ENCODE measurements at regions of chr12 and their contacts with region 1.

Region 1: DNA sequence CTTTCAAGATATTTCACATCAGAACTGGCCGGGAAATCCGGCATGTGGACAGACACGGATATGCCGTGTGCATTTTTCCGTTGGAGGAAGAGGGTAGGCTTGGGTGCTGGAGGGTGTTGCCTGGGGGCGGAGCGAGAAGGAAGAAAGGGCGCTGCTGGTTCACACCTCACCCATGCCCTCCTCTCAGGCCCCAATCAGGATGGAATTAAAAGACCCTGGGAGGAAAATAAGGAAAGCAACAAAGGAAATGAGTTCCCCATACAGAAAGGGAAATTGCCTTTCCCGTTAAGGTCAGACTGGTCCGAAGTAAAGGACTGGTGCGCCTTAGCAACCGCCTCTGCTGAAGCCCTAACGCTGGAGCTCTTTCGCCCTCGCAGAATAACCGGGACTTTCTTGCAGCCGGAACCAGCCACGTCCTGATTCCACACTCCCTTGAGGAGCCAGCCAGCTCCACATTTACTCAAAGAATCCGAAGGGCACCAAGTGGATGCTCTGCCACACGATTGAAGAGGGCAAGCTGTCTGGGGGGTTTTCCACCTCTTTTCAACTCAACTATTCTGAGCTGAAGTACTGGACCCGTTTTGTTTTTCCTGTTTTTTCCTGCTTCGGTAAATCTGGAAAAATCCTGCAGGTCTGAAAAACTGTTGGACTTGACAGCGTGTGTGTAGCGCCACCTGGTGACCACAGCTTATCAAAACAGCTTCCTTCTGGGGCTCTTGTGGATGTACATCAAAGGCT is 37.7 kb upstream of the BCL2L14 start:
- DNase-seq: peak; percentile 78
- ATAC-seq: peak; percentile 70
- H3K4me3 ChIP-seq: peak overlapping the region; percentile 21 to 76 (median 48)
- H3K4me3 Mint-ChIP-seq: peak overlapping the region; percentile 75
- H3K27ac ChIP-seq: no peak overlapping the region
- H3K27ac Mint-ChIP-seq: no peak overlapping the region
- H3K4me1 ChIP-seq: peaks cover 12 to 15% of the 10 kb centered on the region in 2 donors
- H3K4me1 Mint-ChIP-seq: peaks cover 13% of the 10 kb centered on the region
- H3K27me3 ChIP-seq: no peaks in the 10 kb centered on the region
- H3K27me3 Mint-ChIP-seq: peaks cover 4% of the 10 kb centered on the region
- CTCF ChIP-seq: peak; percentile 87

Region 2: GRCh38 chr12:11344500-11344899 is 688.5 kb before region 1 on chr12:
- CTCF ChIA-PET with region 1: no interaction called
- POLR2A ChIA-PET with region 1: no interaction called
- intact Hi-C with region 1: no loop called
- DNase-seq: no peak
- ATAC-seq: no peak
- H3K4me3 ChIP-seq: no peak overlapping the region
- H3K4me3 Mint-ChIP-seq: no peak overlapping the region
- H3K27ac ChIP-seq: no peak overlapping the region
- H3K27ac Mint-ChIP-seq: no peak overlapping the region
- H3K4me1 ChIP-seq: no peaks in the 10 kb centered on the region
- H3K4me1 Mint-ChIP-seq: no peaks in the 10 kb centered on the region
- H3K27me3 ChIP-seq: no peaks in the 10 kb centered on the region
- H3K27me3 Mint-ChIP-seq: no peaks in the 10 kb centered on the region
- CTCF ChIP-seq: no peak

Region 3: GRCh38 chr12:11595080-11595479 is 437.9 kb before region 1 on chr12:
- CTCF ChIA-PET with region 1: interaction called, 12 read pairs
- POLR2A ChIA-PET with region 1: no interaction called
- intact Hi-C with region 1: no loop called
- DNase-seq: no peak
- ATAC-seq: no peak
- H3K4me3 ChIP-seq: no peak overlapping the region
- H3K4me3 Mint-ChIP-seq: no peak overlapping the region
- H3K27ac ChIP-seq: no peak overlapping the region
- H3K27ac Mint-ChIP-seq: no peak overlapping the region
- H3K4me1 ChIP-seq: peaks cover 3 to 5% of the 10 kb centered on the region in 2 donors
- H3K4me1 Mint-ChIP-seq: peaks cover 1% of the 10 kb centered on the region
- H3K27me3 ChIP-seq: no peaks in the 10 kb centered on the region
- H3K27me3 Mint-ChIP-seq: peaks cover 3% of the 10 kb centered on the region
- CTCF ChIP-seq: no peak

Region 4: DNA sequence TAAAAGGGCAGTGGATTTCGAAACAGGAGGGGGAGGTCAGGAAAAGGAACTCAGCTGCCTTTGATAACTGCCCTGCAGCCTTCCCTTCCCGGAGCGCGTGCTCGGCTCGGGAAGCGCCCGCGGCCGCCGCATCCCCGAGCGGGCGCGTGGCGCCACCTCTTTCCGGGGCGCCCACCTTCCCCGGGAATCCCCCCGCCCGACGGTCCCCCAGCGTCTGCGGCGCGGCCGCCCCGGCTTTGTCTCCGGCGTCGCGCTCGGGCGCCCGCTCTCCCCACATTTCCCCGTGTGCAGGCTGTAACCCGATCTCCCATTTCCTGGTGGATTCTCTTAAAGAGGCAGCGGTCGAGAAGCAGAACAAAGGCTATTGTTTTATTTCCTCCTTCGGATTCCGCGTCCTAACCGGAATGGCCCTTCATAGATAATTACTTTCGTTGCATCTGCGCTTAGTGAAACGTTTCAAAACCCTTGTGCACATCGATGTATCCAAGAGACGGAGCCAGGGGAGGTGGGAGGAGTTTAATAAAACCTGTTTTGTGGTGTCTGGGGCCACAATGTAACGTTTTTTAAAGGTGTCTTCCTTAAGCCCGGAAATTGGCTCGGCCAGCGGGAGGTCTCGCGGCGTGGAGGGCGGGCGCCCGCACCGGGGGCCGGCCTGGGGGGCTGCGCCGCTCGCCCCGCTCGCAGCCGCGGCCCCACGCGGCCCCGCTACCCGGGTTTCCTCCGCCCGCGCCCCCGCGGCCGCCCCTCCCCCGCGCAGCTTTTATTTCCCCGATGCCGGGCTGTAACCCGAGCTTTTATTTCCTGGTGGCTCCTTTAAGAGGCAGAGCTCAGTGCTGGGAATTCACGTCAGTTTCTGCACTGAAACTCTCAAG is 384.0 kb before region 1 on chr12 and contains the start of gene ETV6:
- CTCF ChIA-PET with region 1: interaction called, 20 read pairs
- POLR2A ChIA-PET with region 1: no interaction called
- intact Hi-C with region 1: no loop called
- DNase-seq: peak; percentile 86
- ATAC-seq: peak; percentile 48
- H3K4me3 ChIP-seq: peak within 1 kb of the TSS; percentile 77 to 96 (median 87)
- H3K4me3 Mint-ChIP-seq: peak within 1 kb of the TSS; percentile 93
- H3K27ac ChIP-seq: peak within 1 kb of the TSS; percentile 72 to 81
- H3K27ac Mint-ChIP-seq: peak within 1 kb of the TSS; percentile 97
- H3K4me1 ChIP-seq: peaks cover 24 to 29% of the 10 kb centered on the region in 2 donors
- H3K4me1 Mint-ChIP-seq: peaks cover 34% of the 10 kb centered on the region
- H3K27me3 ChIP-seq: no peaks in the 10 kb centered on the region
- H3K27me3 Mint-ChIP-seq: no peaks in the 10 kb centered on the region
- CTCF ChIP-seq: no peak
- total RNA-seq, gene ETV6: 123 and 131 TPM in 2 replicates

Region 5: GRCh38 chr12:11746024-11746771 is 286.8 kb before region 1 on chr12:
- CTCF ChIA-PET with region 1: interaction called, 7 read pairs
- POLR2A ChIA-PET with region 1: no interaction called
- intact Hi-C with region 1: loop called (anchors 5 kb)
- DNase-seq: peak; percentile 84
- ATAC-seq: peak; percentile 67
- H3K4me3 ChIP-seq: peak overlapping the region in 2 of 5 experiments; percentile 3 to 13
- H3K4me3 Mint-ChIP-seq: peak overlapping the region; percentile 68
- H3K27ac ChIP-seq: peak overlapping the region; percentile 19 to 71
- H3K27ac Mint-ChIP-seq: peak overlapping the region; percentile 89
- H3K4me1 ChIP-seq: peaks cover 65 to 80% of the 10 kb centered on the region in 2 donors
- H3K4me1 Mint-ChIP-seq: peaks cover 83% of the 10 kb centered on the region
- H3K27me3 ChIP-seq: no peaks in the 10 kb centered on the region
- H3K27me3 Mint-ChIP-seq: no peaks in the 10 kb centered on the region
- CTCF ChIP-seq: no peak

Region 6: DNA sequence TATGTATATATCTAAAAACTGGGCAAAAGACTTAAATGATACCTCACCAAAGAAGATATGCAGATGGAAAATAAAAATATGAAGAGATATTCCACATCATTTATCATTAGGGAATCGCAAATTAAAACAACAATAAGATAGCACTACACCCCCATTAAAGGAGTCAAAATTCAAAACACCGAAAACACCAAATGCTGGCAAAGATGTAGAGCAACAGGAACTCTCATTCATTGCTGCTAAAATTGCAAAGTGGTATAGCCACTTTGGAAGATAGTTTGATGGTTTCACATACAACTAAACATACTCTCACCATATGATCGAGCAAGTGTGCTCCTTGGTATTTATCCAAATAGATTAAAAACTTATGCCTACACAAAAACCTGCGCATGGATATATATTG is 93.8 kb before region 1 on chr12:
- CTCF ChIA-PET with region 1: no interaction called
- POLR2A ChIA-PET with region 1: no interaction called
- intact Hi-C with region 1: no loop called
- DNase-seq: no peak
- ATAC-seq: no peak
- H3K4me3 ChIP-seq: no peak overlapping the region
- H3K4me3 Mint-ChIP-seq: no peak overlapping the region
- H3K27ac ChIP-seq: no peak overlapping the region
- H3K27ac Mint-ChIP-seq: no peak overlapping the region
- H3K4me1 ChIP-seq: no peaks in the 10 kb centered on the region
- H3K4me1 Mint-ChIP-seq: no peaks in the 10 kb centered on the region
- H3K27me3 ChIP-seq: no peaks in the 10 kb centered on the region
- H3K27me3 Mint-ChIP-seq: no peaks in the 10 kb centered on the region
- CTCF ChIP-seq: no peak

Region 7: DNA sequence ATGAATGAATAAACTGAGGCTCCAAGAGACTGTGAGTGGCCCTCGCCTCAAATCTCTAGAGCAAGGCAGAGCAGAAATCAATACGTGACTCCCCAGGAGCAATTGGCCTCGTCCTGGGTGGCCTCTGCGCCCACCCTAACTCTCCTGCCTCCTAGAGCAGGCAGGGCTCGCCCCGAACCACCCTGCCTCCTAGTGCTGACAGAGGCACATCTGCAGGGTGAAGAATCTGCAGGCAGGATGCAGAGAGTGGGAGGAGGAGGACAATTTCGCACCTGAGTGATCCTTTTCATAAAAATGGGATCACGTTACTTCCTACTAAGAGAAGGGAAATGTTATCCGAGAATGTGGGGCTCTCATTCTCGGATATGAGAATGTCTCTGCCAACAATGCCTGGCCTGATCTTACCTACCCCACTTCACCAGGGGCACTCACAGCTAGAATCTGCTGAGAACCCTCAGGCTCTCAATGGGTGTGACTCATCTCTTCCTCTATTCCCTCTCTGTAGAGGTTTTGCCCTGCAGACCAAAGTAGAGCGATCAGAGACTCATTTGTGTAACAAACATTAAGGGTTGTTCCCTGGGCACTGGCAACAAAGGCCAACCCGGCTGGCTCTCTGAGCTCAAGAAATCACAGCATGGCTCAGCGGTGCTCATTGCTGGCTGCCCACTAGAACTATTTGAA is 23.9 kb before region 1 on chr12:
- CTCF ChIA-PET with region 1: interaction called, 42 read pairs
- POLR2A ChIA-PET with region 1: no interaction called
- intact Hi-C with region 1: loop called (anchors 2 kb)
- DNase-seq: peak; percentile 26
- ATAC-seq: peak; percentile 59
- H3K4me3 ChIP-seq: no peak overlapping the region
- H3K4me3 Mint-ChIP-seq: peak overlapping the region; percentile 39
- H3K27ac ChIP-seq: no peak overlapping the region
- H3K27ac Mint-ChIP-seq: peak overlapping the region; percentile 73
- H3K4me1 ChIP-seq: peaks cover 46 to 48% of the 10 kb centered on the region in 2 donors
- H3K4me1 Mint-ChIP-seq: peaks cover 61% of the 10 kb centered on the region
- H3K27me3 ChIP-seq: no peaks in the 10 kb centered on the region
- H3K27me3 Mint-ChIP-seq: no peaks in the 10 kb centered on the region
- CTCF ChIP-seq: no peak

Region 8: GRCh38 chr12:12282761-12283425 is 249.9 kb after region 1 on chr12:
- CTCF ChIA-PET with region 1: no interaction called
- POLR2A ChIA-PET with region 1: no interaction called
- intact Hi-C with region 1: no loop called
- DNase-seq: no peak
- ATAC-seq: no peak
- H3K4me3 ChIP-seq: no peak overlapping the region
- H3K4me3 Mint-ChIP-seq: no peak overlapping the region
- H3K27ac ChIP-seq: no peak overlapping the region
- H3K27ac Mint-ChIP-seq: no peak overlapping the region
- H3K4me1 ChIP-seq: no peaks in the 10 kb centered on the region
- H3K4me1 Mint-ChIP-seq: no peaks in the 10 kb centered on the region
- H3K27me3 ChIP-seq: peaks cover 0 to 3% (median 1%) of the 10 kb centered on the region in 4 experiments
- H3K27me3 Mint-ChIP-seq: peaks cover 20% of the 10 kb centered on the region
- CTCF ChIP-seq: no peak

Measured in B cell (primary cell).